ENCODE measurements at regions of chr1 and their contacts with region 1.

Region 1: GRCh38 chr1:151443846-151444782 is 15.2 kb downstream of the POGZ start:
- DNase-seq: no peak
- ATAC-seq: peak; percentile 97
- H3K4me3 Mint-ChIP-seq: no peak overlapping the region
- H3K27ac Mint-ChIP-seq: peak overlapping the region; percentile 41
- H3K4me1 Mint-ChIP-seq: peaks cover 53% of the 10 kb centered on the region
- H3K27me3 Mint-ChIP-seq: no peaks in the 10 kb centered on the region
- CTCF ChIP-seq: no peak

Region 2: DNA sequence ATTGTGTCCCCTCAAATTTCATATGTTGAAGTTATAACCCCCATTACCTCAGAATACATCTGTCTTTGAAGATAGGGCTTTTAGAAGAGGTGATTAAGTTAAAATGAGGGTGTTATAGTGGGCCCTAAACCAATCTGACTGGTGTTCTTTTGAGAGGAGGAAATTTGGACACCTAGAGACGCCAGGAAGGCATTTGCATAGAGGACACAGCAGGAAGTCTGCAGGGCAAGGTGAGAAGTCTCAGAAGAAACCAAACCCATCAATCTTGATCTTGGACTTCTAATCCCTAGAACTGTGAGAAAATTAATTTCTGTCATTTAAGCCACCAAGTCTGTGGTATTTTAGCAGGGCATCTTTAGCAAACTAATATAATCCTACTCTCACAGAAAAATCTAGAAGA is 760.2 kb before region 1 on chr1:
- CTCF ChIA-PET with region 1: no interaction called
- POLR2A ChIA-PET with region 1: interaction called, 13 read pairs
- intact Hi-C with region 1: no loop called
- DNase-seq: no peak
- ATAC-seq: peak; percentile 40
- H3K4me3 Mint-ChIP-seq: no peak overlapping the region
- H3K27ac Mint-ChIP-seq: peak overlapping the region; percentile 43
- H3K4me1 Mint-ChIP-seq: peaks cover 10% of the 10 kb centered on the region
- H3K27me3 Mint-ChIP-seq: no peaks in the 10 kb centered on the region
- CTCF ChIP-seq: no peak

Region 3: GRCh38 chr1:151187205-151187604 is 256.9 kb before region 1 on chr1:
- CTCF ChIA-PET with region 1: no interaction called
- POLR2A ChIA-PET with region 1: no interaction called
- intact Hi-C with region 1: no loop called
- DNase-seq: no peak
- ATAC-seq: no peak
- H3K4me3 Mint-ChIP-seq: no peak overlapping the region
- H3K27ac Mint-ChIP-seq: no peak overlapping the region
- H3K4me1 Mint-ChIP-seq: peaks cover 34% of the 10 kb centered on the region
- H3K27me3 Mint-ChIP-seq: no peaks in the 10 kb centered on the region
- CTCF ChIP-seq: no peak

Region 4: DNA sequence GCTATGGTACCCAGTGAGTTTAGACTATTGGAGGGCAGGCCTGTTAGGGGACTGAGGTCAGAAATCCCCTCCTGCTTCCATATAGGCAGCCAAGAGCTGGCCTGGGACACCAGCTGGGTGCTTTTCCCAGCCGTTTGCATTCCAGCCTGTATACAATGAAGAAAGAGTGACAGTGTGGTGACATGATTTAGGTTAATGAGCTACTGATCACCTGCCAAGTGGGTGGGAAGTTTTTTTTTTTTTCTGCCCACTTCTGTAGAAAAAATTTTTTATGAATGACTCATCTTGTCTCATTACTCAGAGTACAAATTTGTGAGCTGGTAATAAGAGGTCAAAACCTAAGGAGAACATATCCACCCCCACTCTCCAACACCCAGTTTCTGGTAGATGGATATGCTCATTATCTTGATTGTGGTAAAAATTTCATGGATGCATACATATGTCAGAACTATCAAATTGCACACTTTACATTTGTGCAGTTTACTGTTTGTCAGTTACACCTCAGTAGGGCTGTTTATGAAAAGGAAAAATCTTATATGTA is 50.7 kb after region 1 on chr1:
- CTCF ChIA-PET with region 1: no interaction called
- POLR2A ChIA-PET with region 1: no interaction called
- intact Hi-C with region 1: loop called (anchors 5 kb)
- DNase-seq: no peak
- ATAC-seq: no peak
- H3K4me3 Mint-ChIP-seq: no peak overlapping the region
- H3K27ac Mint-ChIP-seq: no peak overlapping the region
- H3K4me1 Mint-ChIP-seq: no peaks in the 10 kb centered on the region
- H3K27me3 Mint-ChIP-seq: peaks cover 3% of the 10 kb centered on the region
- CTCF ChIP-seq: no peak

Region 5: DNA sequence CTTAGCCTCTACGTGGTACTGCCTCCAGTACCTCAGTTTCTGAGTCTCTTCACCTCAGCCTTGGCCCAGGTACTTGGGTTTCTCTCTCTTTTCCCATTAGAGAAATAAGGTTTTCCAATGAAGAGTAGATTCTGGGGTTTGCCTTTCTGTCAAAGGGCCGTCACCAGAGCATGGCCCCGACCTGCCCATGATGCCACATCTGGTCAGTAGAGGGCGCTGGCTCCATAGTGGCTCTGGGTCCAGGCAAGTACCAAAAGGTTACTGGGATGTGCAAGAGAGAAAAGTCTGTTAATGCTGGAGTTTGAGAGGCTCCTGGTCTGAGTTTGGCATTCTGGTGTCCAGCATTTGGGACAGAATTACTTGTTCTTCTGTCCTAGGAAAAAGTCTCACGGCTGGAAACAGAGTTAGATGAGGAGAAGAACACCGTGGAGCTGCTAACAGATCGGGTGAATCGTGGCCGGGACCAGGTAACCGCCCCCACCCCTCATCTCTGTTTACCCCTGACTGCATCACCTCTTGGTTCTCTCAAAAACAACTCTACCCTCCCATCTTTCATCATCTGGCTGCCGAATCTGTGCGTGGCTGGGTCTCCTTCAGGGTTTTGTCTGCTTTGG is 90.7 kb after region 1 on chr1:
- CTCF ChIA-PET with region 1: interaction called, 4 read pairs
- POLR2A ChIA-PET with region 1: no interaction called
- intact Hi-C with region 1: loop called (anchors 1 kb)
- DNase-seq: peak; percentile 49
- ATAC-seq: peak; percentile 71
- H3K4me3 Mint-ChIP-seq: no peak overlapping the region
- H3K27ac Mint-ChIP-seq: no peak overlapping the region
- H3K4me1 Mint-ChIP-seq: peaks cover 6% of the 10 kb centered on the region
- H3K27me3 Mint-ChIP-seq: no peaks in the 10 kb centered on the region
- CTCF ChIP-seq: no peak

Region 6: GRCh38 chr1:151594143-151594625 is 150.1 kb after region 1 on chr1:
- CTCF ChIA-PET with region 1: interaction called, 11 read pairs
- POLR2A ChIA-PET with region 1: no interaction called
- intact Hi-C with region 1: loop called (anchors 1 kb)
- DNase-seq: peak; percentile 66
- ATAC-seq: peak; percentile 97
- H3K4me3 Mint-ChIP-seq: peak overlapping the region; percentile 69
- H3K27ac Mint-ChIP-seq: peak overlapping the region; percentile 46
- H3K4me1 Mint-ChIP-seq: peaks cover 10% of the 10 kb centered on the region
- H3K27me3 Mint-ChIP-seq: peaks cover 11% of the 10 kb centered on the region
- CTCF ChIP-seq: peak; percentile 45

Region 7: DNA sequence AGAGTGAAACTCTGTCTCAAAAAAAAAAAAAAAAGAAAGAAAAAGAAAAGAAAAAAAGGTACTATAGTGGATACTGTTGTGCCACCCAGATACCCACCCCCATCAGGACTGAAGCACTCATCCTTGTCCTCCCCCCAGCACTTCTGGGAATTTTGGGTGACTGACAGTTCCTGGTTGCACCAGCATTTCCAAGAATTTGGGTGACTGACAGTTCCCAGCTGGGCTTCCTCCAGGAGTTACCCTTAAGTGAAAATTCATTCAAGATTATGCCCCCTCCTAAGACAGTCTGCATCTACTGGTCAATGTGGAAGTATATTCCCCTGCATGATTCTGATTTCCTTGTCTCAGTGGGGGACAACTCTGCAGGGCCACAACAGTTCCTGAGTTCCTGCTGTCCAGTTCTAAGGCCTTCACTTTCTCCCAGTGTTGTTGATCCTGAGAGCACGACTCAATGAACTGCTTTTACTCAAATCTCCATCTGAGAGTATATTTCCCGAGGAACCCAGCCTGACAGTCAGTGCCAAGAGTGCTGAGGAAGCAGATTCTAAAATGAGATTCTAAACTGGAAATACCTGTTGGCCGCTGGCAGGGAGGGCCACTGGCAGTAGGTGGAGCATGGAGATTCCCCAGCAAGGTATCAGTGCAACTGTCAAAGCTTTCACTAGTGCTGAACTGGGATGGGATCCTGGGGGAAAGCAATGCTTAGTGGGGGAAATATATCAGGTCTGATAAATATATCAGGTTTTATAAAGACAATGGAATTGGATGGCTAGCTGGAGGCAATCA is 295.7 kb after region 1 on chr1:
- CTCF ChIA-PET with region 1: interaction called, 9 read pairs
- POLR2A ChIA-PET with region 1: no interaction called
- intact Hi-C with region 1: loop called (anchors 1 kb)
- DNase-seq: no peak
- ATAC-seq: no peak
- H3K4me3 Mint-ChIP-seq: no peak overlapping the region
- H3K27ac Mint-ChIP-seq: no peak overlapping the region
- H3K4me1 Mint-ChIP-seq: no peaks in the 10 kb centered on the region
- H3K27me3 Mint-ChIP-seq: peaks cover 4% of the 10 kb centered on the region
- CTCF ChIP-seq: no peak

Region 8: GRCh38 chr1:151839457-151840405 is 395.6 kb after region 1 on chr1 and contains the start of gene C2CD4D:
- CTCF ChIA-PET with region 1: interaction called, 6 read pairs
- POLR2A ChIA-PET with region 1: interaction called, 3 read pairs
- intact Hi-C with region 1: loop called (anchors 1 kb)
- DNase-seq: peak; percentile 52
- ATAC-seq: peak; percentile 55
- H3K4me3 Mint-ChIP-seq: peak within 1 kb of the TSS; percentile 81
- H3K27ac Mint-ChIP-seq: peak within 1 kb of the TSS; percentile 35
- H3K4me1 Mint-ChIP-seq: peaks cover 52% of the 10 kb centered on the region
- H3K27me3 Mint-ChIP-seq: peaks cover 3% of the 10 kb centered on the region
- CTCF ChIP-seq: no peak
- total RNA-seq, gene C2CD4D: 0.15 TPM in 1 of 2 replicates, not detected in the other

Measured in activated B cell treated with CpG ODN at 0.5 μM for 24 hours (primary cell).